Motor neuron (in vitro differentiated cells): ENCODE measurements at regions of chr9 and their contacts with region 1.

Region 1: GRCh38 chr9:93159601-93160471 is 24.1 kb upstream of the WNK2 start:
- ATAC-seq: peak; percentile 98 to 100 (median 99)
- H3K4me3 ChIP-seq: no peak overlapping the region
- H3K27ac ChIP-seq: no peak overlapping the region
- H3K4me1 ChIP-seq: peaks cover 4 to 17% of the 10 kb centered on the region in 2 donors

Region 2: GRCh38 chr9:93302551-93303257 is 142.9 kb after region 1 on chr9:
- in situ Hi-C with region 1: loop called in 6 of 9 experiments (anchors 10 to 25 kb)
- ATAC-seq: peak in 3 of 8 experiments; percentile 64 to 76 (median 75)
- H3K4me3 ChIP-seq: no peak overlapping the region
- H3K27ac ChIP-seq: no peak overlapping the region
- H3K4me1 ChIP-seq: no peaks in the 10 kb centered on the region

Region 3: GRCh38 chr9:93427655-93428379 is 268.0 kb after region 1 on chr9:
- in situ Hi-C with region 1: loop called in 1 of 9 experiments (anchors 25 kb)
- ATAC-seq: no peak
- H3K4me3 ChIP-seq: no peak overlapping the region
- H3K27ac ChIP-seq: no peak overlapping the region
- H3K4me1 ChIP-seq: peaks cover 5 to 6% of the 10 kb centered on the region in 2 donors

Region 4: GRCh38 chr9:93566408-93567270 is 406.8 kb after region 1 on chr9:
- in situ Hi-C with region 1: loop called in 1 of 9 experiments (anchors 25 kb)
- ATAC-seq: peak; percentile 93 to 98 (median 94)
- H3K4me3 ChIP-seq: peak overlapping the region; percentile 38 to 51 (median 47)
- H3K27ac ChIP-seq: peak overlapping the region; percentile 88 to 96
- H3K4me1 ChIP-seq: peaks cover 9 to 10% of the 10 kb centered on the region in 2 donors

Region 5: DNA sequence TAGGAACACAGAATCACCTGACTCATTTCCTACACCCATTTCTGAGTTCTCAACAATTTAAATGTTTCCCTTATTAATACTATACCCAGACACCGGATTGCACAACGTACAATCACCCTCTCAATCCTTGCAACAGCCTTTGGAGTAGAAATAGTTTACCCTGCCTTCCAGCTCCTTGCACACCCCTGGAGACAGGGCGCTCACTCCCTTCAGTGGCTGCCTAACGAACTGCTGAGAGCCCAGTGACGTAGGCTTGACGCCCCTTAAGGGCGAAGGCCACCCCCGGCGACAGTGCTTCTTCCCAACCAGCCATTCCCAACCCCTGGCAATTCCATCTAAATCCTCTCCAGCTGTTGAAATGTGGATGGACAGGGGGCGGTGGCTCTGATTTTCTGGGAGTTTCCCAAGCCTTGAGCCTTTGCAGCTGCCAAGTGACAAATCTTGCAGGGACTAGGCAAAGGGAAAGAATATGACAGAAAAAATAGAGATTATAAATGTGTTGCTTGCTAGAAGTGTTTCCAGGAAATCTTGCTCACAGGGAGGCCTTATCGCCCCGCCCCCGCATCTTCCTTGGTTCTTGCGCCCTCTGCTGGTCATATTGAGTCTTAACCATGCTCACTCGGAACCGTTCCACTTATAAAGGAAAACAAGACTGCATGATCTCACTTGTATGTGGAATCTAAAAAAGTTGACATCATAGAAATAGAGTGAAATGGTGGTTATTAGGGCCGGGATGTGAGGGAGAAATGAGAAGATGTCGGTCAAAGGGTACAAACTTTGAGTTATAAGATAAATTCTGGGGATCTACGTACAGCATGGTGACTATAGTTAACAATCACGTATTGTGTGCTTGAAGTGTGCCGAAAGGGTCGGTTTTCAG is 803.0 kb after region 1 on chr9:
- in situ Hi-C with region 1: loop called in 1 of 9 experiments (anchors 25 kb)
- ATAC-seq: peak; percentile 69 to 88 (median 84)
- H3K4me3 ChIP-seq: no peak overlapping the region
- H3K27ac ChIP-seq: no peak overlapping the region
- H3K4me1 ChIP-seq: peaks cover 5 to 11% of the 10 kb centered on the region in 2 donors